RWPE1 (cell line): ENCODE measurements at regions of chr6 and their contacts with region 1.

Region 1: DNA sequence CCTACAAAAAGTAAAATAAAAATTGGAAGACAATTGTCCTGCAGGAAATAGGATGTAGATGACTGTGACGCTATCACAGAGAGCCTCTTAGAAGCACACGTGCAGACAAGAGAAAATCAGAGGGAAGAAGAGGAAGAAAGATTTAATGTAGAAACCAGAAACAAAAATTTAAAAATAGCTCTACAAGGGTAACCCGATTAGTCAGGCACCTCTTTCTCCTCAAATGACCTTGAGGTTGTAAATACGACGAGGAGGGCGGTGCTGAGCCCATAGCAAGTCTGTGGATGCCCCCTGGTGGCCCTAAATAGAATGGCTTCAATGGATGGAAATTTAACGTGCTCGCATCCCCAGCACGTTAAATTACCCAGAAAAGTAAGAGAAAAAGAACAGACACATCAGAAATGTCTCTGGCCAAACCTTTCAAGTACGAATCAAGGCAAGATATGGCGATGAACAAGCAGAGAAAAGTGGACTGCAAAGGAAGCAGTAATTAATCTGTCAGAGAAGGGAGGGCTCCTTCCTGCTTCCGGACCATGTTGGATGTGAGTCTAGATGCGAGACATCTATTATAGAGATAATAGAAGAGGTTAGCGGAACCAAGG is 4.2 kb upstream of the PRPH2 start:
- DNase-seq: peak; percentile 83
- H3K27ac ChIP-seq: peak overlapping the region; percentile 65
- CTCF ChIP-seq: peak; percentile 86

Region 2: GRCh38 chr6:42661540-42662153 is 64.9 kb before region 1 on chr6:
- CTCF ChIA-PET with region 1: interaction called, 15 read pairs
- POLR2A ChIA-PET with region 1: no interaction called
- DNase-seq: peak; percentile 59
- H3K27ac ChIP-seq: no peak overlapping the region
- CTCF ChIP-seq: peak; percentile 90

Region 3: DNA sequence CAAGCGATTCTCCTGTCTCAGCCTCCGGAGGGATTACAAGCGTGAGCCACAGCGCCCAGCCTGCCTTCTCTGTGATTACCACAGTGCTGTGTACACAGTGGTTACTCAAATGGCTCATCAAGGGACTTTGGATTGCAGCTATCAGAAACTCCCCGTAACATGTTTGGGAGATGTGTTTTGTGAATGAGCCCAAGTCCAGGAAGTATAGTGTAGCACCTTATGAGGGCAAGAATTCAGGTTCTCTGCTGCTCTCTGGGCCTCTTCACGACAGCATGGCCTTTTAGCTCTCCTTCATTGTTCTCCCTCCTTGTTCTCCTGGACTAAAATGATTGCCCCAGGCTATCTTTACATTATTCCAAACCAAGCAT is 118.7 kb after region 1 on chr6:
- CTCF ChIA-PET with region 1: no interaction called
- POLR2A ChIA-PET with region 1: no interaction called
- DNase-seq: no peak
- H3K27ac ChIP-seq: no peak overlapping the region
- CTCF ChIP-seq: no peak

Region 4: DNA sequence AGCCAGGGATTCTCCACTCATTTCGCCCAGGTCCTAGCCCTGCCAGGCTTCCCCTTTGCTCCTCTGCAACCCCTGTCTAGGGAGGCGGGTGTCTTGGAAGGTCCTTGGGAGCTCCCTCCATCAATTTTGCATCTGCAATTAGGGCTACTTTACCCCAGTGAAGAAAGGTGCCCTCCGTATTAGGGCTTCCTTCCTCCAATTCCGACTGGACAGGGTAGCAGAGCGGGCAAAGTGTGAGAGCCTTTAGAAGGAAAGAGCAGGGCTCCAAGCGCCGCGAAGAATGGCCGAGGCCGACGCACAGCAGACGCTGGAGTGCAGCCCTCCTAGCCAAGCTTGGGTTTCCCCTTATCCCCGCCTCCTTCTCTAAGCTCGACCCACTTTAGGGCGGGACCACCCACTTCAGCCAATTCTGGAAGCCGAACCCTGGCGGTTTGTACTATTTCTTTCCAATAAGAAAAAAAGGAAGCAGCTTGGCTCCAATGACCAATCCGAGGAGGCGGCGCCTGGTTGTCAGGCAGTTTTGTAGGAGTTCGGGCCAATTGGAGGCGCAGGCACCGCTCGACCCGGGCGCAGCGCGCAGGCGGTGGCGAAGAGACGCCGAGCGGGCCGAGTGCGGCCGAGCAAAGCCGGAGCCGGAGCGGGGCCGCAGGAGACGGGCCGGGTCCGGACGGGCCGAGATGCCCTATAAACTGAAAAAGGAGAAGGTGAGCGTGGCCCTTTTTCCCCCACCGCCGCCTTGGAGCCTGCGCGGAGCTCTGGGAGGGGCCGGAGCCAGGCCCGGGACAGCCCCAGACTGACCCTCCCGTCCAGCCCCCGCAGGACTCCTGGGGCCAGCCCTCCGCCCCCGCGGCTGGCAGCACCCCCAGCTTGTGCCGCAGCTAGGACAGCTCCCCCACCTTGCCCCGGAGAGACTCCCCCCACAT is 257.7 kb after region 1 on chr6 and contains the start of gene PPP2R5D:
- CTCF ChIA-PET with region 1: no interaction called
- POLR2A ChIA-PET with region 1: no interaction called
- DNase-seq: peak; percentile 97
- H3K27ac ChIP-seq: peak within 1 kb of the TSS; percentile 82
- CTCF ChIP-seq: no peak

Region 5: GRCh38 chr6:43045371-43045930 is 318.9 kb after region 1 on chr6:
- CTCF ChIA-PET with region 1: no interaction called
- POLR2A ChIA-PET with region 1: no interaction called
- DNase-seq: no peak
- H3K27ac ChIP-seq: peak overlapping the region; percentile 9; the same call in 1 of the 2 replicates
- CTCF ChIP-seq: no peak